PC-3 (cell line): ENCODE measurements at regions of chr14 and their contacts with region 1.

Region 1: GRCh38 chr14:33342299-33342974 is 403.8 kb downstream of the NPAS3 start:
- DNase-seq: peak; percentile 25
- ATAC-seq: peak; percentile 49
- H3K4me3 ChIP-seq: no peak overlapping the region
- H3K27ac ChIP-seq: no peak overlapping the region
- H3K4me1 ChIP-seq: peaks cover 14% of the 10 kb centered on the region
- H3K27me3 ChIP-seq: no peaks in the 10 kb centered on the region
- CTCF ChIP-seq: peak; percentile 46; the same call in 1 of the 2 replicates

Region 2: DNA sequence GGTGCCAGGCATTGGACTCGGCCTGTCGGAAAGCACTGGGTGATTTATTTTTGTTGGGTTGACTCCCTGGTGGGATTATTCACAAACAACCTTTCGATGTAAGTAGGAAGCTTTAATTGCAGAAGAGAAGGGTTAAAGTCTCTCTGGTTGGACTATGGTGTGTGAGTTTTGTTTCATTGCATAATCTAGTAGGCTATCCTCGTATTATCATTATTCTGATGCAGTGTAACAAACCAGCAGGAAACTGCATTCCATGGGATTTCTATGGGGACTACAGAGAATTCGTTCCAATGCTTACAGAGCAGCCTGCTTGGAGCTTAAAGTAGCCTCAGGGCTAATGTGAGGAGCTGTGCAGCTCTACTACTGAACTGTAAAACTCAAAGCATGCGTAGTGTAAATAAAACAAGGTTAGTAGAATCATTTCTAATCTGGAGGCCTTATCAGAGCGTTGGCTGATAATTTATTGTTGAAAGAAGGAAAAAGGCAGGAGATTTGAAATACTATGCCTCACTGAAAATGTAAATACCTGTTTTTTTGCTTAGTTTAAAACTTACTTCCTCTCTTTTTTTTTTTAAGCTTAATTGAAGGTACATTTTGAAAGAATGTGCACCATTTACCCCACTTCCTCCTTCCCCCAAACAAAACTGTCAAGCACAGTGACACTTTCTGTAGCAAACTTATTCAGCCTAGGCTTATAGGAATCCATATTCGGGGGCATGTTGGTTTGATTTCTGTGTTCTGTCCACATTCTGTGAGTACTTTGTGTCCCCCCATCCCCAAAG is 177.1 kb before region 1 on chr14:
- CTCF ChIA-PET with region 1: no interaction called
- POLR2A ChIA-PET with region 1: no interaction called
- intact Hi-C with region 1: no loop called
- DNase-seq: peak; percentile 57
- ATAC-seq: peak; percentile 70
- H3K4me3 ChIP-seq: no peak overlapping the region
- H3K27ac ChIP-seq: no peak overlapping the region
- H3K4me1 ChIP-seq: peaks cover 13% of the 10 kb centered on the region
- H3K27me3 ChIP-seq: peaks cover 3% of the 10 kb centered on the region; the same call in 1 of the 2 replicates
- CTCF ChIP-seq: no peak

Region 3: DNA sequence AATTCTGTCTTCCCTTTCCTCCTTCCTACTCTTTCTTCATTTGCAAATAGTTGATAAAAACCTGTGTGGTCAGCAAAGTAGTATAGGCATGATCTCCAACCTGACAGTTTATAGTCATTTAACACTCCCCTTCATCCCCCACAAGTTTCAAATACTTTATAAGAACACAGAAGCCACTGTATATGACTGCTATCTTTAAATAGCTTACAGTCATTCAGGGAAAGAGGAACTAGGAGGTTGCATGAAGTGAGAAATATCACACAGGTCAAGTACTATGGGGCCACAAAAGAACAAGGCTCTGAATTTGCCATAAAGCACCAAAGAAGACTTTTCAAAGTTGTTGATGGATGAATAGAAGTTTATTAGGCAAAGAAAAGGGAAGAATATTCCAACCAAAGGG is 27.5 kb after region 1 on chr14:
- CTCF ChIA-PET with region 1: interaction called, 13 read pairs
- POLR2A ChIA-PET with region 1: no interaction called
- intact Hi-C with region 1: no loop called
- DNase-seq: no peak
- ATAC-seq: no peak
- H3K4me3 ChIP-seq: no peak overlapping the region
- H3K27ac ChIP-seq: no peak overlapping the region
- H3K4me1 ChIP-seq: no peaks in the 10 kb centered on the region
- H3K27me3 ChIP-seq: 0 out of 2 replicates have a peak, but pooled peaks cover 4% of the 10 kb centered on the region
- CTCF ChIP-seq: no peak